ENCODE measurements at regions of chr16 and their contacts with region 1.

Region 1: GRCh38 chr16:2919511-2920255 is 8.0 kb downstream of the FLYWCH1 start:
- DNase-seq: peak; percentile 70
- H3K4me3 Mint-ChIP-seq: no peak overlapping the region
- H3K27ac Mint-ChIP-seq: peak overlapping the region; percentile 58
- H3K4me1 Mint-ChIP-seq: peaks cover 13% of the 10 kb centered on the region
- H3K27me3 Mint-ChIP-seq: no peaks in the 10 kb centered on the region

Region 2: GRCh38 chr16:2838928-2839327 is 80.8 kb before region 1 on chr16:
- CTCF ChIA-PET with region 1: interaction called, 31 read pairs
- DNase-seq: peak; percentile 67
- H3K4me3 Mint-ChIP-seq: no peak overlapping the region
- H3K27ac Mint-ChIP-seq: no peak overlapping the region
- H3K4me1 Mint-ChIP-seq: peaks cover 28% of the 10 kb centered on the region
- H3K27me3 Mint-ChIP-seq: peaks cover 35% of the 10 kb centered on the region

Region 3: DNA sequence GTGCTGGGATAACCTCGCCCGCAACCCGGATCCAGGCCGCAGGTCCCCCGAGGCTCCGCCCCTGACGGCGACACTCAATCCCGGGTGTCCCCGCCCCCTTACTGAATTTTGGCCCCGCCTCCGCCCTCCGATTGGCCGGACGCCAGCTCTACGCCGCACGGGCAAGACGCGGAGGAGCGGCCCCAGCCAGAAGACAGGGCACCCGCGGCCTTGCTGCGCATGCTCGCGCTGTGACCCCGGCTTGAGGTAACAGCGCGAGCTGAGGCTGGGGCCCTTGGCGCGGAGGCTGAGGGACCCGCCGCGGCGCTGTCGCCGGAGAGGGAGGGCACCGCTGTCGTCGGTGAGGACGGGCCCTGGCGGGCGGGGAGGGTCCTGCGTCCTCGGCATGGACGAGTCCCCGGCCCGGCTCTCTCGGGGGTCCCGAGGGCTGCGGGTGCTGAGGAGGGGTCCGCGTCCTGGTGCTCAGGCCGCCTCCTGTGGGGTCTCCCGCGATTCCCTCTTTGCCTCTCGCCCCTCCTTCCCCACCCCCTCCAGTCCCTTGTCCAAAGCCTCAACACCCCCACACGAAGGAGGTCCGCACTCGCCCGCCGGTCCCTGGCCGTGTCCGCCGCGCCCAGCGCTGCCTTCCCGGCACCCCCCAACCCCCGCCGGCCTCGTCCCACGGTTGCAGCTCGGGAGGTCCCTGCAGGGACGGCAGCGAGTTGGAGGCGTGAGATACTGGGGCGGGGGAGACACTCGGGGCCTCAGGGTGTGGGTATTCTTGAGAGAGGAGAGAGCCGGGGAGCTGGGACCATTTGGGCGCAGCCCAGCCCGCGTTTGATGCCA is 36.4 kb before region 1 on chr16 and contains the start of gene FLYWCH2:
- CTCF ChIA-PET with region 1: interaction called, 10 read pairs
- DNase-seq: peak; percentile 100
- H3K4me3 Mint-ChIP-seq: peak within 1 kb of the TSS; percentile 84
- H3K27ac Mint-ChIP-seq: peak within 1 kb of the TSS; percentile 94
- H3K4me1 Mint-ChIP-seq: peaks cover 20% of the 10 kb centered on the region
- H3K27me3 Mint-ChIP-seq: peaks cover 5% of the 10 kb centered on the region

Region 4: GRCh38 chr16:3134564-3135417 is 215.1 kb after region 1 on chr16 and contains the start of gene ZNF213:
- CTCF ChIA-PET with region 1: no interaction called
- DNase-seq: peak; percentile 97
- H3K4me3 Mint-ChIP-seq: peak within 1 kb of the TSS; percentile 93
- H3K27ac Mint-ChIP-seq: peak within 1 kb of the TSS; percentile 93
- H3K4me1 Mint-ChIP-seq: peaks cover 38% of the 10 kb centered on the region
- H3K27me3 Mint-ChIP-seq: no peaks in the 10 kb centered on the region